Activated naive CD4-positive, alpha-beta T cell treated with anti-CD3 and anti-CD28 coated beads for 36 hours (primary cell): ENCODE measurements at regions of chr3 and their contacts with region 1.

Region 1: GRCh38 chr3:46947981-46948791 is 28.4 kb downstream of the CCDC12 start:
- DNase-seq: peak; percentile 78
- H3K4me3 Mint-ChIP-seq: peak overlapping the region; percentile 32
- H3K27ac Mint-ChIP-seq: peak overlapping the region; percentile 79
- H3K4me1 Mint-ChIP-seq: peaks cover 76% of the 10 kb centered on the region
- H3K27me3 Mint-ChIP-seq: no peaks in the 10 kb centered on the region

Region 2: GRCh38 chr3:46959161-46959511 is 10.9 kb after region 1 on chr3:
- CTCF ChIA-PET with region 1: interaction called, 8 read pairs
- intact Hi-C with region 1: loop called (anchors 1 kb)
- DNase-seq: peak; percentile 65
- H3K4me3 Mint-ChIP-seq: no peak overlapping the region
- H3K27ac Mint-ChIP-seq: peak overlapping the region; percentile 92
- H3K4me1 Mint-ChIP-seq: peaks cover 84% of the 10 kb centered on the region
- H3K27me3 Mint-ChIP-seq: no peaks in the 10 kb centered on the region